Ovary (tissue), 10 donors: ENCODE measurements at regions of chr7 and their contacts with region 1.

Region 1: DNA sequence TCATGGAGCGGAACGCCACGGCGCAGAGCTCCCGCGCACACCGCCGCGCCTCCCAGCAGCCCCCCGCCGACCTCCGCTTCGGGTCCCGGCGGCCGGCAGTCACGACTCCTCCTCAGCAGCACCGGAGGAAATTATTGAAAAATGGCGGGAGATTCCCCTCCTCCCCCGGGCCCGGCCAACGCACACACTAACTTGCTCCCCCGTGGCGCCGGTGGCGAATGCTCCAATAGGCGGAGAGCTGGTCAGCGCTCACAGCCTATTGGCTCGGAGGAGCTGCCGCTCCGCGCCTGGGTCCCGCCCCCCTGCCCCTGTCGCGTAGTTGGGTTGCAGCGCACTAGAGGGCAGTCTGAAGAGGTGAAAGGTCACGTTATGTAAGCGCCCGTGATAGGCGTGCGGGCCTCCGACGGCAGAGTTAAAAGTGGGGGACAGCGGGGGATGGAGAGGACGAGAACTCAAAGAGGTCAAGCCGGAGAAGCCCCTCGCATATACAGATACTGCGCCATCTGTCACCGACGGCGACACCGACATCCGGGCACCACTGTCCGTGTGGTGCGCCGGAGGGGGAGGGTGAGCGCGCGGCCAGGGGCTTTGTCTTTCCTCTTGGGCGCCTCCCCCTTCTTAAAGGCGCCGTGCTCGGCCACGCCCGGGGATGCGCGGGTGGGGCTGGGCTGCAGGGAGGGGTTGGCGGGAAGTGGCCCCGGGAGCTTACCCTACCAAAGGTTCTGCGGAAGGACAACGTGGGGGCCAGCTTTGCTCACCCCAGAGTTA is at the start of gene BAZ1B:
- DNase-seq: peak; percentile 97 to 98 (median 98)
- H3K4me3 ChIP-seq: peak within 1 kb of the TSS; percentile 75
- H3K27ac ChIP-seq: peak within 1 kb of the TSS; percentile 86 to 96
- H3K4me1 ChIP-seq: peaks cover 8% of the 10 kb centered on the region
- H3K27me3 ChIP-seq: no peaks in the 10 kb centered on the region
- CTCF ChIP-seq: peak in 1 of 3 donors; percentile 17
- EP300 ChIP-seq: no peak
- POLR2A ChIP-seq: peak; percentile 58
- total RNA-seq, gene BAZ1B: 37.6 to 89.7 (median 63.3) TPM

Region 2: DNA sequence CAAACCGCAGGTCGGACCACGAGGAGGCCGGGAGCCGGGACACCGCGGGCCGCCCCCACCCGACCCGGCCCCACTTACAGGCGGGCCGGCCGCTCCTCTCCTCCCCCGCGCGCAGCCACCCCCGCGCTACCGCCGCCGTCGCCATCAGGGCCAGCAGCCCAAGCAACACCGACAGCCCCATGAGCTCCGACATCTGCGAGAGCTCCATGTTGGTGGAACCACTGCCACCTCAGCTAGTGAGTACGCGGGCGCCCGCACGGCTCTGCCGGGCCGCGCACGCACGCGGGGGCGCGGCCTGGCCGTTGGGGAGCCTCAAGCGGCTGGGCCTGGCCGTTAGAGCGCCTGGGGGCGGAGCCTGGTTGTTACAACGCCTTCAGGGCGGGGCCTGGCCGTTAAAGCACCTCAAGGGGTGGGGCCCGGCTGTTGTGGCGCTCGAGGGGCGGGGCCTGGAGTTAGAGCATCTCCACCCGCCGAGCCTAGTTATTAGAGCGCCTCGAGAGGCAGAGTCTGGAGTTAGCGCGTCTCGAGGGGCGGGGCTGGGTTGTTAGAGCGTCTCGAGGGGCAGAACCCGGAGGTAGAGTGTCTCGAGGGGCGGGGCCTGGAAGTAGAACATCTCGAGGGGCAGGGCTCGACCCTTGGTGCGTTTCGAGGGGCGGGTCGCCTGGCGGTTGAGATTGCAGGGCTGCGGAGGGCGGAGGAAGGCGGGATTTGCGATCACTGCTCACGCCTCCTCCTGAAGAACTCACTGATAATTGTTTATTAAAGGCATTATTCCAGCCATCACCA is 56.2 kb after region 1 on chr7 and contains the start of gene TBL2:
- intact Hi-C with region 1: loop called in 1 of 4 experiments (anchors 10 kb)
- DNase-seq: peak; percentile 98 to 100 (median 99)
- H3K4me3 ChIP-seq: peak within 1 kb of the TSS; percentile 89
- H3K27ac ChIP-seq: peak within 1 kb of the TSS; percentile 80 to 88
- H3K4me1 ChIP-seq: peaks cover 10% of the 10 kb centered on the region
- H3K27me3 ChIP-seq: no peaks in the 10 kb centered on the region
- CTCF ChIP-seq: peak; percentile 9 to 16 (median 12)
- EP300 ChIP-seq: no peak
- POLR2A ChIP-seq: peak; percentile 92
- total RNA-seq, gene TBL2: 32.7 to 47.3 (median 42.5) TPM

Region 3: GRCh38 chr7:73660001-73660400 is 137.7 kb after region 1 on chr7:
- intact Hi-C with region 1: no loop called
- DNase-seq: no peak
- H3K4me3 ChIP-seq: no peak overlapping the region
- H3K27ac ChIP-seq: no peak overlapping the region
- H3K4me1 ChIP-seq: no peaks in the 10 kb centered on the region
- H3K27me3 ChIP-seq: no peaks in the 10 kb centered on the region
- CTCF ChIP-seq: no peak
- EP300 ChIP-seq: no peak
- POLR2A ChIP-seq: no peak

Region 4: GRCh38 chr7:73703757-73704639 is 181.7 kb after region 1 on chr7:
- intact Hi-C with region 1: no loop called
- DNase-seq: peak; percentile 78 to 86 (median 80)
- H3K4me3 ChIP-seq: peak overlapping the region; percentile 28
- H3K27ac ChIP-seq: peak overlapping the region in 1 of 2 donors; percentile 73
- H3K4me1 ChIP-seq: peaks cover 12% of the 10 kb centered on the region
- H3K27me3 ChIP-seq: no peaks in the 10 kb centered on the region
- CTCF ChIP-seq: no peak
- EP300 ChIP-seq: no peak
- POLR2A ChIP-seq: no peak